GM13977 (cell line): ENCODE measurements at regions of chr6 and their contacts with region 1.

Region 1: GRCh38 chr6:28355743-28356665 is 6.3 kb downstream of the ZKSCAN3 start:
- DNase-seq: peak; percentile 68
- CTCF ChIP-seq: peak; percentile 86

Region 2: DNA sequence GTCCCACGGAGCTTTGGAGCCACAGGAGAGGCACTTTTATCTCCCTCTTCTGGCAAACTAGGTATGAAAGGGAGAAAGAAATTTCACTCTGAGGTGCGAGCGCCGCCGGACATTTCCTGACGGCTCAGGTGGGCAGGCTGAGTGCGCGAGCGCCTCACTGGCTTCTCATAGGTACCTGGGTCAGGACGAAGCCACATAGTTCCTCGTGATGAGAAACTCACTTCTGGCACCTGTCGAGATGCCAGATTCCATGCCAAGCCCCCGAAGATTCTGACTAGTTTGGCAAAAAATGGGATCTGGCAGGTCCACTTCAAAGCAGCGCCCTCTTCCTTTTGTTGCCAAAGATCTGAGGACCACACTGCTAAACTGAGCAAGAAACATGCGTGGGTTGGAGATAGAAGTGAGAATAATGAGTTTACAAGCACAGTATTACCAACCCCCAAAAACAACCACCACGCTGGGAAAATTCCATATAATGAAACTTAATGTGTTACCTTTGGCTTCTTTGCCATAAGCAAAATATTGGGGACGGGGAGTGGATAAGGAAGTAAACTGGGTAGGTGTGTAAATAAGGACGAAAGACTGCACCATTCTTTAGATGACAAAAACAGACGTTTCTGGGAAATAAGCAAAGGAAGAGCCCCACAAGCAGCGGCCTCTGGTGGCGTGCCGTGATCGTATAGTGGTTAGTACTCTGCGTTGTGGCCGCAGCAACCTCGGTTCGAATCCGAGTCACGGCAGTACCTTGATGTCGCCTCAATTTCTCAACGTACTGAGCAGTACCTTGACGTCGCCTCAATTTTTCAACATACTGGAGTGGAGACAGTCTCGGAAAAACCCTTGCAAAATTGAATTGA is 1198.3 kb before region 1 on chr6:
- in situ Hi-C with region 1: loop called (anchors 25 kb)
- DNase-seq: no peak
- CTCF ChIP-seq: peak; percentile 64

Region 3: GRCh38 chr6:28136585-28137504 is 219.2 kb before region 1 on chr6:
- in situ Hi-C with region 1: loop called (anchors 10 kb)
- DNase-seq: peak; percentile 58
- CTCF ChIP-seq: no peak